Sigmoid colon (tissue), 7 donors: ENCODE measurements at regions of chr2 and their contacts with region 1.

Region 1: DNA sequence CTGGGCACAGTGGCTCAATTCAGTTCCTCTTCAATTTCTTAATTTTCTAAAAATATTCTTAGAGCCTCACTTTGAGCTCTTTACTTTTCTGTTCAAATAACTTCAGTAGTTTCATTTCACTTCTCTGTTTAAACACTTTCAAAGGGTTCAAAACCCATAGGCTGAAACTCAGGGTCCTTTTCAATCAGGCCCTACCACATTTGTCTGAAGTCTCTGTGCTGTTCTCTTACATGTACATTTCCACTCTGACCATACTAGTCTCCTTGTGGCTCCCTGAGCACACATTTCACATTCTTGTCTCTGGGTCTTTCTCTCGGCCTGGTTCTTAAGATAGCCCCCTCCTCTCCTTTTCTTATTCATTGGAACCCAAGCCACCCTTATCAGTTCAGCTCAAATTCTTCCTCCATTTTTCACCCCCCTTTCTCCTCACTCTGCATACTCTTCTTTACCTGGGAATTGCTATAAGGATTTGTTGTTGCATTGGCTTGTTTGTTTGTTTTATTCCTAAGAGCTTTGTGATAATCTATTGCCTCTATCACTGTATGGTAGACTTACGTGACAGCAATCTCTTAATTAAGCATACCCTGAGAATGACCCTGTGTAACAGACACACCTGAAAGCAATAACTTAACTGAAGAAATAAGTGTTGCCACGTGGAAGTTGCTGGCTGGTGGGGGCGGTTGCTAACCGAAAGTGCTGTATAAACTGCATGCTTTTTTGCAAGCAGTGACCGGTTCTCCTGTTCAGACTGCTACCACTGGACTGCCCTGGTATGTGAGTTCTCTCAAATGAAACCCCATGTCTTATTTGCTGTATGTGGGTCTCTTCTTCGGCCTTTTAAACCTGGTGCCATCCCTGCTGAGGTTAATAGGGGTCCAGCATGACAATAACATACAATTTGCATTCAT is 27.7 kb upstream of the ACADL start:
- DNase-seq: no peak
- H3K4me3 ChIP-seq: no peak overlapping the region
- H3K27ac ChIP-seq: no peak overlapping the region
- H3K4me1 ChIP-seq: no peaks in the 10 kb centered on the region
- H3K27me3 ChIP-seq: no peaks in the 10 kb centered on the region
- CTCF ChIP-seq: no peak
- EP300 ChIP-seq: no peak
- POLR2A ChIP-seq: no peak

Region 2: GRCh38 chr2:210195101-210195852 is 57.7 kb before region 1 on chr2:
- intact Hi-C with region 1: no loop called
- DNase-seq: peak; percentile 54
- H3K4me3 ChIP-seq: peak overlapping the region in 3 of 4 donors; percentile 19 to 32 (median 30)
- H3K27ac ChIP-seq: no peak overlapping the region
- H3K4me1 ChIP-seq: peaks cover 0 to 6% (median 3%) of the 10 kb centered on the region in 4 donors
- H3K27me3 ChIP-seq: no peaks in the 10 kb centered on the region
- CTCF ChIP-seq: peak; percentile 10 to 76 (median 62)
- EP300 ChIP-seq: no peak
- POLR2A ChIP-seq: no peak

Region 3: GRCh38 chr2:210399440-210400041 is 146.6 kb after region 1 on chr2:
- intact Hi-C with region 1: loop called (anchors 5 kb)
- DNase-seq: no peak
- H3K4me3 ChIP-seq: no peak overlapping the region
- H3K27ac ChIP-seq: no peak overlapping the region
- H3K4me1 ChIP-seq: no peaks in the 10 kb centered on the region
- H3K27me3 ChIP-seq: no peaks in the 10 kb centered on the region
- CTCF ChIP-seq: peak in 1 of 4 experiments; percentile 24
- EP300 ChIP-seq: no peak
- POLR2A ChIP-seq: no peak